ENCODE measurements at regions of chr17 and their contacts with region 1.

Region 1: DNA sequence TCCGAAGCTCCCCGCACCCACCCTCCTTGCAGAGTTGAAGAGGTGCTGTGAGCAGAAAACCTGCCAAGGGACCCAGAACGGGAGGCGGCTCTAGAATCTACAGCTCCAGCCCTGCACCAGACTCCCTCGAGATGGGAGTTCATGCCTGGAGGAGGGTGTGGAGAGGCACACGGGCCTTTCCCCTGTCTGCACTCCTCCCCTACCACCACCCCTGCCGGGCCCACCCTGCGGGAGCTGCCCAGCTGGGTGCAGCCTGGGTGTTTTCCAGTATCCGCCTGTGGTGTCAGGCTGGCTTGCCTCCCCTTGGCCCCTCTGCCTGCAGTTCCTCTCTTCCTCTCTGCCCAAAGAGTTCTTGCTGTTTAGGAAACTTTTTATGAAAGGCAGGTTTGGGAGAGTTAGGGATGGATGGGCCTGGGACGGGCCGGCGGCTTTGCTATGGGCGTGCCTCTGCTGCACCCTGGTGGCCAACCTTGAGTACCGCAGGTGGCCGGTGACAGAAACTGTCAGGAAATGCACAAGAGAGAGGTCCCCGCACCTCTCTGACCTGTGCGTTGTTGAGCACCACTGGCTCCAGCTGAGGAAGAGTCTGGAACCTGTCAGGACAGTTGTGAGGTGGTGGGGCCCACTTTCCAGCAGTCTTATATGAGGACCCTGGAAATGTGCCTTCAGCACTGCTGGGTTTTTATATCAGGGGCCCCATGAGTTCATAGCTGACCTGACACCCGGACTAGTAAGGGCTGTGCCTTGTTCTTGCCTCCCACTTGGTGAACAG is 354.1 kb downstream of the SEC14L1 start:
- DNase-seq: peak; percentile 82 to 86 (median 85)
- ATAC-seq: peak; percentile 88
- H3K4me3 ChIP-seq: no peak overlapping the region
- H3K4me1 ChIP-seq: no peaks in the 10 kb centered on the region
- CTCF ChIP-seq: peak; percentile 93

Region 2: DNA sequence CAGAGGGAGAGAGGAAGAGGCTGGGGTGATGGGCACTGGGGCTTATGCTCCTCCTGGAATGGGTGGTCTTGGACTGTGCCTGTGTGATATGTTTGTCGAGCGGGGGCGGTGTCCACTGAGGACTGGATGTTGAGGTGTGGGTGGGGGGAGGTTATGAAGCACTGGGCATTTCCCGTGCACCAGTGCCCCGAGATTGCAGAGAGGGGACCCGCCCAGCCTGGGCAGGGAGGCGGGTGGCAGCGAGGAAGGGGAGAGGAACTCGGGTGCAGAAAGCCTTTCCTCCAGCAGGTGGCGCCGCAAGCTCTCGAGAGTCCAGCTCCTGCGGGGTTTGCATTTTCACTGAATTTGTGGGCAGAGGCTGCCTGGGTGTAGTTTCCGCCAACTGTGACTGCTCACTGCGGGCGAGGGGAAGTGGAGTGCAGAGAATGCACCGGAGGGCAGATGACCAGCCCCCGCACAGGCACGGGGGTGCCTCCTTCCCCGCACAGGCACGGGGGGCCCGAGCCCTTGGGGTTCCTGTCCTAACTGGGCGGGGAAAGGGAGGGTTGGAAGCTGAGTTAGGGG is 163.5 kb before region 1 on chr17:
- intact Hi-C with region 1: loop called (anchors 5 kb)
- DNase-seq: peak; percentile 94 to 98 (median 96)
- ATAC-seq: peak; percentile 86
- H3K4me3 ChIP-seq: no peak overlapping the region
- H3K4me1 ChIP-seq: peaks cover 38% of the 10 kb centered on the region
- CTCF ChIP-seq: peak; percentile 86

Region 3: GRCh38 chr17:77429919-77430752 is 64.7 kb before region 1 on chr17:
- intact Hi-C with region 1: loop called (anchors 5 to 10 kb)
- DNase-seq: peak; percentile 88 to 90 (median 90)
- ATAC-seq: peak; percentile 68
- H3K4me3 ChIP-seq: no peak overlapping the region
- H3K4me1 ChIP-seq: peaks cover 61% of the 10 kb centered on the region
- CTCF ChIP-seq: peak; percentile 64

Region 4: GRCh38 chr17:77744066-77744988 is 249.5 kb after region 1 on chr17:
- intact Hi-C with region 1: no loop called
- DNase-seq: no peak
- ATAC-seq: no peak
- H3K4me3 ChIP-seq: no peak overlapping the region
- H3K4me1 ChIP-seq: no peaks in the 10 kb centered on the region
- CTCF ChIP-seq: no peak

Measured in mucosa of descending colon (tissue), 3 donors.